ENCODE measurements at regions of chr5 and their contacts with region 1.

Region 1: GRCh38 chr5:54243473-54244080 is 66.8 kb downstream of the ARL15 start:
- DNase-seq: peak in 2 of 4 donors; percentile 24 to 39
- ATAC-seq: peak; percentile 64
- H3K4me3 ChIP-seq: no peak overlapping the region
- H3K27ac ChIP-seq: no peak overlapping the region
- H3K4me1 ChIP-seq: peaks cover 0 to under 1% of the 10 kb centered on the region in 2 donors
- H3K27me3 ChIP-seq: no peaks in the 10 kb centered on the region
- CTCF ChIP-seq: peak; percentile 45 to 51

Region 2: DNA sequence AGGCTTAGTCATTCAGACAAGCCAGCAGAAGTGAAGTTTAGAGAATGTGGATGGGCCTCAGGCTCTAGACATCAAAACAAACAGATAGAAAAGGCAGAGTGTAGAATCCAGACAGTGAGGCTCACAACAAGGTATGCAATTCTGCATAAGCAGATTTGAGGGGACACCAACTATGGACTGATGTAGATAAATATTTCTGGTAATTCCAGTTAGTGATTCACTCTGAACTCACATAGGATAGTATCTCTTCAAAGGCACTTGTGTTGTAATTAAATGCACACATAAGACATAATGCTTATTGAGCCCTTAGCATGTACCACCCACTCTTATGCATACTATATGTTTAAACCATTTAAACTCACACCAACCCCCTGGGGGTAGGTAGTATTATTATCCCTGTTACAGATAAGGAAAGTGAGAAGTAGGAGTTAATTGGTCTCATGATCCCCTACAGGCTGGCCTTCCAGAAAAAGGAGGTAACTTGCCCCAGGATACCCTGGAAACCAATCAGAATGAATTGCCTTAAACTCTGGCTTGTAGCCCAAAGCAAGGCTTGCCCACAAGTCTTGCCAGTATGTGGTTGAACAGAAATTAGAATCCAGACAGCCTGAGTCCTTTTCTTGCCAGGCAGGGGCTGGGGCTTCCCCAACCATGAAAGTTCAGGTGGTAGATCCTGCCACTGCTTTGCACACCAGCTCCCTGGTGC is 172.5 kb after region 1 on chr5:
- intact Hi-C with region 1: loop called in 1 of 2 experiments (anchors 10 kb)
- DNase-seq: no peak
- ATAC-seq: no peak
- H3K4me3 ChIP-seq: no peak overlapping the region
- H3K27ac ChIP-seq: no peak overlapping the region
- H3K4me1 ChIP-seq: no peaks in the 10 kb centered on the region
- H3K27me3 ChIP-seq: no peaks in the 10 kb centered on the region
- CTCF ChIP-seq: no peak